A673 (cell line): ENCODE measurements at regions of chr7 and their contacts with region 1.

Region 1: DNA sequence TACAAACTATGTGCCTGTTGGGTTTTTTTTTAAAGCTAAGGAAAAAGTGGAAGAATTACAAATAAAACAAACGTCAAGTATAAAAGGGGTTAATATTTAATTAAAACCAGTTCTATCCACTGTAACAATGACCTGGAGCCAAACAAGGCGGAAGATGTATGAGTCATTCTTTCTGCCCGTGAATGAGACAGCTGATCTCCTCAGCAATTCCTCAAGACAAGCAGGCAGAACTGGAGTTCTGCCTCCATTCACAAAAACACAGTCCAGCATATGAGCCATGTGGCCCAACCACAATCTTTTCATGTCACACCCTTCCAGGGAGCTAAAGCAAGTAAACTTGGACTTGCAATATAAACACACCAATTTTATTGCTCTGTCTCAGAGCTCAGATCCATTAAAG is 8.4 kb downstream of the ETV1 start:
- DNase-seq: peak; percentile 94
- H3K4me3 ChIP-seq: peak overlapping the region; percentile 13
- H3K27ac ChIP-seq: peak overlapping the region; percentile 82
- H3K4me1 ChIP-seq: peaks cover 63% of the 10 kb centered on the region
- H3K27me3 ChIP-seq: no peaks in the 10 kb centered on the region
- CTCF ChIP-seq: no peak

Region 2: GRCh38 chr7:13886356-13886755 is 94.7 kb before region 1 on chr7:
- CTCF ChIA-PET with region 1: no interaction called
- POLR2A ChIA-PET with region 1: no interaction called
- intact Hi-C with region 1: no loop called
- DNase-seq: no peak
- H3K4me3 ChIP-seq: no peak overlapping the region
- H3K27ac ChIP-seq: no peak overlapping the region
- H3K4me1 ChIP-seq: no peaks in the 10 kb centered on the region
- H3K27me3 ChIP-seq: no peaks in the 10 kb centered on the region
- CTCF ChIP-seq: no peak

Region 3: GRCh38 chr7:13920053-13920697 is 60.9 kb before region 1 on chr7:
- CTCF ChIA-PET with region 1: no interaction called
- POLR2A ChIA-PET with region 1: no interaction called
- intact Hi-C with region 1: loop called (anchors 2 kb)
- DNase-seq: peak; percentile 98
- H3K4me3 ChIP-seq: peak overlapping the region; percentile 6
- H3K27ac ChIP-seq: peak overlapping the region; percentile 81
- H3K4me1 ChIP-seq: peaks cover 36% of the 10 kb centered on the region
- H3K27me3 ChIP-seq: no peaks in the 10 kb centered on the region
- CTCF ChIP-seq: no peak

Region 4: GRCh38 chr7:14000247-14000646 is 19.2 kb after region 1 on chr7:
- CTCF ChIA-PET with region 1: no interaction called
- POLR2A ChIA-PET with region 1: no interaction called
- intact Hi-C with region 1: no loop called
- DNase-seq: no peak
- H3K4me3 ChIP-seq: no peak overlapping the region
- H3K27ac ChIP-seq: no peak overlapping the region
- H3K4me1 ChIP-seq: no peaks in the 10 kb centered on the region
- H3K27me3 ChIP-seq: no peaks in the 10 kb centered on the region
- CTCF ChIP-seq: no peak

Region 5: GRCh38 chr7:14233076-14233867 is 252.2 kb after region 1 on chr7:
- CTCF ChIA-PET with region 1: no interaction called
- POLR2A ChIA-PET with region 1: no interaction called
- intact Hi-C with region 1: no loop called
- DNase-seq: peak; percentile 13
- H3K4me3 ChIP-seq: no peak overlapping the region
- H3K27ac ChIP-seq: no peak overlapping the region
- H3K4me1 ChIP-seq: no peaks in the 10 kb centered on the region
- H3K27me3 ChIP-seq: no peaks in the 10 kb centered on the region
- CTCF ChIP-seq: no peak

Region 6: GRCh38 chr7:14691597-14692203 is 710.6 kb after region 1 on chr7:
- CTCF ChIA-PET with region 1: no interaction called
- POLR2A ChIA-PET with region 1: no interaction called
- intact Hi-C with region 1: loop called (anchors 5 kb)
- DNase-seq: peak; percentile 61
- H3K4me3 ChIP-seq: no peak overlapping the region
- H3K27ac ChIP-seq: no peak overlapping the region
- H3K4me1 ChIP-seq: peaks cover 4% of the 10 kb centered on the region
- H3K27me3 ChIP-seq: no peaks in the 10 kb centered on the region
- CTCF ChIP-seq: peak; percentile 92